HepG2 (cell line): ENCODE measurements at regions of chr10 and their contacts with region 1.

Region 1: DNA sequence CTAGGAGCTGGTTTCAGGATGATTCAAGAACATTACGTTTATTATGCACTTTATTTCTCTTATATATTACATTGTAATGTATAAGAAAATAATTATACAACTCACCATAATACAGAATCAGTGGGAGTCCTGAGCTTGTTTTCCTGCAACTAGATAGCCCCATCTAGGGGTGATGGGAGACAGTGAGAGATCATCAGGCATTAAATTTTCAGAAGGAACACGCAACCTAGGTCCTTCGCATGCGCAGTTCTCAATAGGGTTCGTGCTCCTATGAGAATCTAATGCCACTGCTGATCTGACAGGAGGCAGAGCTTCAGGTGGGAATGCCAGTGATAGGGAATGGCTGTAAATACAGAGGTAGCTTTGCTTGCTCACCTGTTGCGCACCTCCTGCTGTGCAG is 137.9 kb downstream of the ANKRD30A start:
- DNase-seq: peak; percentile 2
- ATAC-seq: no peak
- H3K4me3 ChIP-seq: no peak overlapping the region
- H3K27ac ChIP-seq: no peak overlapping the region
- H3K4me1 ChIP-seq: no peaks in the 10 kb centered on the region
- H3K27me3 ChIP-seq: no peaks in the 10 kb centered on the region
- CTCF ChIP-seq: peak; percentile 48
- EP300 ChIP-seq: no peak
- POLR2A ChIP-seq: no peak
- RAD21 ChIP-seq: no peak

Region 2: GRCh38 chr10:36943534-36943933 is 319.8 kb before region 1 on chr10:
- CTCF ChIA-PET with region 1: no interaction called
- POLR2A ChIA-PET with region 1: no interaction called
- in situ Hi-C with region 1: loop called (anchors 25 kb)
- intact Hi-C with region 1: no loop called
- DNase-seq: no peak
- ATAC-seq: peak; percentile 65
- H3K4me3 ChIP-seq: no peak overlapping the region
- H3K27ac ChIP-seq: no peak overlapping the region
- H3K4me1 ChIP-seq: no peaks in the 10 kb centered on the region
- H3K27me3 ChIP-seq: no peaks in the 10 kb centered on the region
- CTCF ChIP-seq: no peak
- EP300 ChIP-seq: no peak
- POLR2A ChIP-seq: no peak
- RAD21 ChIP-seq: no peak

Region 3: GRCh38 chr10:37246639-37247038 is 16.7 kb before region 1 on chr10:
- CTCF ChIA-PET with region 1: no interaction called
- POLR2A ChIA-PET with region 1: no interaction called
- in situ Hi-C with region 1: no loop called
- intact Hi-C with region 1: no loop called
- DNase-seq: no peak
- ATAC-seq: no peak
- H3K4me3 ChIP-seq: no peak overlapping the region
- H3K27ac ChIP-seq: no peak overlapping the region
- H3K4me1 ChIP-seq: no peaks in the 10 kb centered on the region
- H3K27me3 ChIP-seq: no peaks in the 10 kb centered on the region
- CTCF ChIP-seq: no peak
- EP300 ChIP-seq: no peak
- POLR2A ChIP-seq: no peak
- RAD21 ChIP-seq: no peak

Region 4: GRCh38 chr10:37379991-37380390 is 116.7 kb after region 1 on chr10:
- CTCF ChIA-PET with region 1: no interaction called
- POLR2A ChIA-PET with region 1: no interaction called
- in situ Hi-C with region 1: no loop called
- intact Hi-C with region 1: no loop called
- DNase-seq: no peak
- ATAC-seq: no peak
- H3K4me3 ChIP-seq: no peak overlapping the region
- H3K27ac ChIP-seq: no peak overlapping the region
- H3K4me1 ChIP-seq: no peaks in the 10 kb centered on the region
- H3K27me3 ChIP-seq: no peaks in the 10 kb centered on the region
- CTCF ChIP-seq: no peak
- EP300 ChIP-seq: no peak
- POLR2A ChIP-seq: no peak
- RAD21 ChIP-seq: no peak

Region 5: DNA sequence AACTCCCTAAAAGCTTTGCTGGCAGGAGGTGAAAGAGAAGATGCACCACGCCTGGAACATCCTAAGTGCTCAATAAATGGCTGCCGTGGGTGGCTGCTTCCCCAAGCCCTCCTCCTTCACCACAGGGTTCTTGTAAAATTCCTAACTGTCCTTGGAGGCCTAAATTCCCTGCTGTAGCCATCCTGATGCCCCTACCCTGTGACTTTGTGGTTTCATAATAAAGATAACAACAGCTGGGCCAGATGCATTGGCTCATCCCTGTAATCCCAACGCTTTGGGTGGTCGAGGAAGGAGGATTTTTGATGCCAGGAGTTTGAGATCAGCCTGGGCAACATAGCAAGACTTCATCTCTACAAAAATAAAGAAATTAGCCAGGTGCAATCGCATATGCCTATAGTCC is 203.9 kb after region 1 on chr10:
- CTCF ChIA-PET with region 1: no interaction called
- POLR2A ChIA-PET with region 1: no interaction called
- in situ Hi-C with region 1: no loop called
- intact Hi-C with region 1: no loop called
- DNase-seq: no peak
- ATAC-seq: no peak
- H3K4me3 ChIP-seq: no peak overlapping the region
- H3K27ac ChIP-seq: no peak overlapping the region
- H3K4me1 ChIP-seq: no peaks in the 10 kb centered on the region
- H3K27me3 ChIP-seq: no peaks in the 10 kb centered on the region
- CTCF ChIP-seq: no peak
- EP300 ChIP-seq: no peak
- POLR2A ChIP-seq: no peak
- RAD21 ChIP-seq: no peak